IMR-90 (cell line): ENCODE measurements at regions of chr5 and their contacts with region 1.

Region 1: GRCh38 chr5:91168859-91169258 is 214.3 kb downstream of the ARRDC3 start:
- DNase-seq: no peak
- ATAC-seq: no peak
- H3K4me3 ChIP-seq: no peak overlapping the region
- H3K27ac ChIP-seq: no peak overlapping the region
- H3K4me1 ChIP-seq: peaks cover 5% of the 10 kb centered on the region; the same call in 1 of the 2 replicates
- H3K27me3 ChIP-seq: no peaks in the 10 kb centered on the region
- CTCF ChIP-seq: no peak
- POLR2A ChIP-seq: no peak
- RAD21 ChIP-seq: no peak

Region 2: GRCh38 chr5:91219803-91220371 is 51.0 kb after region 1 on chr5:
- CTCF ChIA-PET with region 1: interaction called, 10 read pairs
- POLR2A ChIA-PET with region 1: no interaction called
- dilution Hi-C with region 1: no loop called
- in situ Hi-C with region 1: loop called (anchors 10 kb)
- intact Hi-C with region 1: no loop called
- DNase-seq: peak; percentile 57
- ATAC-seq: peak; percentile 25; the same call in 1 of the 2 replicates
- H3K4me3 ChIP-seq: no peak overlapping the region
- H3K27ac ChIP-seq: peak overlapping the region; percentile 47; the same call in 1 of the 2 replicates
- H3K4me1 ChIP-seq: peaks cover 2% of the 10 kb centered on the region
- H3K27me3 ChIP-seq: no peaks in the 10 kb centered on the region
- CTCF ChIP-seq: peak; percentile 37
- POLR2A ChIP-seq: no peak
- RAD21 ChIP-seq: peak; percentile 41